Left cardiac atrium (tissue), 4 donors: ENCODE measurements at regions of chr1 and their contacts with region 1.

Region 1: GRCh38 chr1:67489643-67490042 is 59.4 kb upstream of the SERBP1 start:
- DNase-seq: no peak
- ATAC-seq: peak; percentile 69 to 84

Region 2: GRCh38 chr1:67230539-67230938 is 259.1 kb before region 1 on chr1:
- intact Hi-C with region 1: loop called in 1 of 2 experiments (anchors 5 kb)
- DNase-seq: no peak
- ATAC-seq: no peak

Region 3: DNA sequence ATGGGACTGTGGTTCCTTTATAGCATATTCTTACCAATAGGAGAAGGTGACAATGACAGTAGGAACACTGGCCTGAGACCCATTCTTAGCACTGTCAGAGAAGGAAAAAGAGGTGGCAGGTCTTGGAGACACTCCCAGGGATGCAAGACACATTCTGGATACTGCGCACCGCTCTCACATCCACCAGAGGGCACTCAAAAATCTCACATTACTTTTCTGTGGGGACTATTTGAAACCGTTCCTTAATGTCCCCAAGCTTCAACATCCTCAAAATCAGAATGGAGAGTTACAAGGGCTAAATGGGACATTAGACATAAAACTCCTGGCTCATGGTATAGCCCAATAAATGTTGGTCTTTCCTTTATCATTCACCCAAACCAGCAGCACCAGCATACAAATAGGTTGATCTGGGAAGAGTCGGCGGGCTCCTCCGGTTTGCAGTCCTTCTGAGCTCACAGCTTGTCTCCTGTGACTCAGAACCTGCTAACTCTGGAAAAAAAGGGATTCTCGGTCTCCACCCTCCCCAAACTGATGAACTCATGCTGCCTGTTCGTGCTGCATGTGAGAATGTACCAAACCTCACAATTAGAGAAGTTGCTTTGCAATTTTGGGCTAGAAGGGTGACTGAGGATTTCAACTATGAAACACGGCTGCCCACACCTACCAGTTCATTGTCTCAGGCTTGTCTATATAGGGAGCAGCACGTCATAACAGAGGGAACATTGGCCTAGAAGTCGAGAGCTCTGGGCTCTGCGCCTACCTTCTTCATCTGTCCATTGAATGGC is 141.8 kb before region 1 on chr1:
- intact Hi-C with region 1: loop called (anchors 2 kb)
- DNase-seq: peak; percentile 26
- ATAC-seq: peak; percentile 78 to 81